Sigmoid colon (tissue), 7 donors: ENCODE measurements at regions of chr3 and their contacts with region 1.

Region 1: GRCh38 chr3:98817547-98818041 is 54.5 kb downstream of the ST3GAL6 start:
- DNase-seq: no peak
- H3K4me3 ChIP-seq: no peak overlapping the region
- H3K27ac ChIP-seq: no peak overlapping the region
- H3K4me1 ChIP-seq: peaks cover 0 to 5% (median 0%) of the 10 kb centered on the region in 4 donors
- H3K27me3 ChIP-seq: no peaks in the 10 kb centered on the region
- CTCF ChIP-seq: peak; percentile 47 to 80 (median 72)
- EP300 ChIP-seq: no peak
- POLR2A ChIP-seq: no peak

Region 2: DNA sequence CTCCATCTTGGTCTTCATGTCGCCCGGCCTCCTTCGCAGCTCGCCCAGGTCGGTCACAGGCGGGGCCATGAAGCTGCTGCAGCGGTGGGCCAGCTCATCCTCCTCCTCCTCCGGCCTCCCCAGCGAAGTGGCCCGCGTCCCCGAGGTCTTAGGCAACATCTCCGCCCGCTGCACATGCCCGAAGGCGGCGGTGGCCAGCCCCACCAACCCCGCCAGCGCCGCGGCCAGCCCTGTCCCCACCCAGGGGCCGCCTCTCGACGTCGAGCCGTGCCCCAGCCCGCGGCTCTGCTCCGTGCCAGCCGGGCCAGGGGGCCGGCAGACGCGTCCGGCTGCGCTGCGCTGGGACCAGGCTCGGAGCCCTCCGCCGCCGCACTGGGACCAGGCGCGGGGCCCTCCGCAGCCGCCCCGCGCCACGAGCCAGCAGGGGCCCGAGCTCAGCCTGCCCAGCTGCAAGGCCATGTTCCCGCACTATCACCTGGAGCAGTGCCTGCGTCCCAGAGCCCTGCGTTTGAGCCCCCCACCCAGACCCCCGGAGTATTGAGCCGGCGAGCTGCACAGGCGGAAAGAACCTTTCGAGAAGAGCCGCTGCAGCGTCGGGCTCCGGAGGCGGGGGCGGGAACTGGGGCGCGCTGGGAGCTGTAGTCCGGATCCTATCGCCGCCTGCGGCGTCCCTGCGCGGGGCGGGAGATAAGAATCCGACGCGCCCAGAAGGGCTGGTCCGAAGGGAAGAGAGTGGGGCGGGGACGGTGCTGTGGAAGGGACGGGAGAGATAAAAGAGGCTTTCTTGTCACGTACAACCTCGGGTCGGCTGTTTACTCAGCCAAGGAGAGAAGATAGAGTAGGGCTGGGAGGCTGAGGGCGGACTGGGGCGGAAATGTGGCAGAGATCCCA is 224.3 kb before region 1 on chr3 and contains the start of gene CPOX:
- intact Hi-C with region 1: loop called (anchors 5 kb)
- DNase-seq: peak; percentile 92
- H3K4me3 ChIP-seq: peak within 1 kb of the TSS; percentile 70 to 87 (median 78)
- H3K27ac ChIP-seq: peak within 1 kb of the TSS; percentile 80 to 85 (median 82)
- H3K4me1 ChIP-seq: peaks cover 0 to 18% (median 14%) of the 10 kb centered on the region in 4 donors
- H3K27me3 ChIP-seq: no peaks in the 10 kb centered on the region
- CTCF ChIP-seq: no peak
- EP300 ChIP-seq: no peak
- POLR2A ChIP-seq: peak in 1 of 2 donors; percentile 17
- total RNA-seq, gene CPOX: 15.3 to 32.7 (median 17.3) TPM

Region 3: DNA sequence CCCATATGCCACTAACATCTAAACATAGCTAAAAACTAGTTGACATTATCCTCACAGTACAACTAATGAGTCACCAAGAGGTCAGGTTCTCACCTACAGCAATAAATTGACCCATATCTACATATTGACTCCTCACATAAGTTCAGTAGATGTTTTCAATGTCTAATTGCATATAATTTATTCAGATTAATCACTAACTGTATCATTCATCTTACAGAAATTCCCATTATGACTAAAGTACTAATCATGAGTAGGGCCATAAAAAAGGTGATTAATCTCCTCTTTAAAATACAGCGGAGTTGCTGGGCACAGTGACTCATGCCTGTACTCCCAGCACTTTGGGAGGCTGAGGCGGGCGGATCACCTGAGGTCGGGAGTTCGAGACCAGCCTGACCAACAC is 136.9 kb before region 1 on chr3:
- intact Hi-C with region 1: no loop called
- DNase-seq: no peak
- H3K4me3 ChIP-seq: no peak overlapping the region
- H3K27ac ChIP-seq: no peak overlapping the region
- H3K4me1 ChIP-seq: no peaks in the 10 kb centered on the region
- H3K27me3 ChIP-seq: no peaks in the 10 kb centered on the region
- CTCF ChIP-seq: no peak
- EP300 ChIP-seq: no peak
- POLR2A ChIP-seq: no peak

Region 4: GRCh38 chr3:98732286-98733052 is 85.1 kb before region 1 on chr3:
- intact Hi-C with region 1: no loop called
- DNase-seq: peak; percentile 72
- H3K4me3 ChIP-seq: peak overlapping the region; percentile 50 to 77 (median 62)
- H3K27ac ChIP-seq: peak overlapping the region; percentile 68 to 72 (median 72)
- H3K4me1 ChIP-seq: peaks cover 0 to 20% (median 9%) of the 10 kb centered on the region in 4 donors
- H3K27me3 ChIP-seq: no peaks in the 10 kb centered on the region
- CTCF ChIP-seq: no peak
- EP300 ChIP-seq: no peak
- POLR2A ChIP-seq: no peak

Region 5: GRCh38 chr3:98901392-98902350 is 84.1 kb after region 1 on chr3 and contains the start of gene DCBLD2:
- intact Hi-C with region 1: loop called (anchors 5 kb)
- DNase-seq: peak; percentile 99
- H3K4me3 ChIP-seq: peak within 1 kb of the TSS; percentile 93 to 98 (median 96)
- H3K27ac ChIP-seq: peak within 1 kb of the TSS; percentile 96 to 98 (median 96)
- H3K4me1 ChIP-seq: peaks cover 0 to 41% (median 25%) of the 10 kb centered on the region in 4 donors
- H3K27me3 ChIP-seq: no peaks in the 10 kb centered on the region
- CTCF ChIP-seq: no peak
- EP300 ChIP-seq: no peak
- POLR2A ChIP-seq: peak; percentile 45 to 73
- total RNA-seq, gene DCBLD2: 38.8 to 56.5 (median 51.3) TPM

Region 6: DNA sequence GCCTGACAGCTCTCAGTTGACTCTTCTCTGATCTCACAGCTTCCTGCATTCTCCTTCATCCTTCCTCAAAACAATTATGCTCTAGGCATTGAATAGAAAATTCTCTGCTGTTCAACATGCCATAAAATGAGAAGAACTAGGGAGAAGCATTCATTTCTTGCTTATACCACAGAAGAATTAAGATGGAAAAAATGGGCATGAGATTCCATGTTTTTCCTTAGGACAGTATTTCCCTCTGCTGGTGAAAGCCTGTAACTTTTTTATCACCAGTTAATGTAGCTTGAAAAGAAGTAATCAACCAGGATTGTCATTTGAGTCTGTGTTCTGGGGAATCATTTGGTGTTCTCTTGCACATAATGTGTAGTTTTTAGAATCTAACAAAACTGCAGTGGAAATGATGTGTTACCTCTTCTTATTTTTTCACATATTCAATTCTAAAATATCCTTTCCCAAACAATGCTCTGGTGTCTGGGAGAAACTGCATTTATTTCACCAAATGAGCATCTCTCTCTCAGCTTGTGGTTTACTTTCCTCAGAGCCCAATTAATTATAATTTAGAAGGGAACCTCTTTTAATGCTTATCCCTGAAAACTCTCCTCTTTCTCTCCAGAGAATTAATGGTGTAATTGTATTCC is 176.7 kb after region 1 on chr3:
- intact Hi-C with region 1: loop called (anchors 1 kb)
- DNase-seq: no peak
- H3K4me3 ChIP-seq: no peak overlapping the region
- H3K27ac ChIP-seq: no peak overlapping the region
- H3K4me1 ChIP-seq: no peaks in the 10 kb centered on the region
- H3K27me3 ChIP-seq: no peaks in the 10 kb centered on the region
- CTCF ChIP-seq: peak; percentile 58 to 79 (median 69)
- EP300 ChIP-seq: no peak
- POLR2A ChIP-seq: no peak

Region 7: GRCh38 chr3:99246010-99246654 is 428.5 kb after region 1 on chr3:
- intact Hi-C with region 1: no loop called
- DNase-seq: no peak
- H3K4me3 ChIP-seq: no peak overlapping the region
- H3K27ac ChIP-seq: no peak overlapping the region
- H3K4me1 ChIP-seq: peaks cover 0 to 8% (median 3%) of the 10 kb centered on the region in 4 donors
- H3K27me3 ChIP-seq: no peaks in the 10 kb centered on the region
- CTCF ChIP-seq: no peak
- EP300 ChIP-seq: no peak
- POLR2A ChIP-seq: no peak